Sigmoid colon (tissue), 7 donors: ENCODE measurements at regions of chr15 and their contacts with region 1.

Region 1: GRCh38 chr15:38683382-38684242 is 119.0 kb upstream of the RASGRP1 start:
- DNase-seq: no peak
- H3K4me3 ChIP-seq: no peak overlapping the region
- H3K27ac ChIP-seq: no peak overlapping the region
- H3K4me1 ChIP-seq: no peaks in the 10 kb centered on the region
- H3K27me3 ChIP-seq: no peaks in the 10 kb centered on the region
- CTCF ChIP-seq: peak; percentile 26 to 68 (median 50)
- EP300 ChIP-seq: no peak
- POLR2A ChIP-seq: no peak

Region 2: GRCh38 chr15:38440353-38441129 is 243.1 kb before region 1 on chr15:
- intact Hi-C with region 1: loop called (anchors 5 kb)
- DNase-seq: no peak
- H3K4me3 ChIP-seq: no peak overlapping the region
- H3K27ac ChIP-seq: no peak overlapping the region
- H3K4me1 ChIP-seq: peaks cover 0 to 7% (median 3%) of the 10 kb centered on the region in 4 donors
- H3K27me3 ChIP-seq: no peaks in the 10 kb centered on the region
- CTCF ChIP-seq: peak; percentile 72 to 92 (median 88)
- EP300 ChIP-seq: no peak
- POLR2A ChIP-seq: no peak

Region 3: GRCh38 chr15:38474155-38474757 is 209.4 kb before region 1 on chr15:
- intact Hi-C with region 1: loop called (anchors 2 kb)
- DNase-seq: no peak
- H3K4me3 ChIP-seq: no peak overlapping the region
- H3K27ac ChIP-seq: no peak overlapping the region
- H3K4me1 ChIP-seq: no peaks in the 10 kb centered on the region
- H3K27me3 ChIP-seq: no peaks in the 10 kb centered on the region
- CTCF ChIP-seq: peak in 3 of 4 experiments; percentile 49 to 64 (median 55)
- EP300 ChIP-seq: no peak
- POLR2A ChIP-seq: no peak

Region 4: DNA sequence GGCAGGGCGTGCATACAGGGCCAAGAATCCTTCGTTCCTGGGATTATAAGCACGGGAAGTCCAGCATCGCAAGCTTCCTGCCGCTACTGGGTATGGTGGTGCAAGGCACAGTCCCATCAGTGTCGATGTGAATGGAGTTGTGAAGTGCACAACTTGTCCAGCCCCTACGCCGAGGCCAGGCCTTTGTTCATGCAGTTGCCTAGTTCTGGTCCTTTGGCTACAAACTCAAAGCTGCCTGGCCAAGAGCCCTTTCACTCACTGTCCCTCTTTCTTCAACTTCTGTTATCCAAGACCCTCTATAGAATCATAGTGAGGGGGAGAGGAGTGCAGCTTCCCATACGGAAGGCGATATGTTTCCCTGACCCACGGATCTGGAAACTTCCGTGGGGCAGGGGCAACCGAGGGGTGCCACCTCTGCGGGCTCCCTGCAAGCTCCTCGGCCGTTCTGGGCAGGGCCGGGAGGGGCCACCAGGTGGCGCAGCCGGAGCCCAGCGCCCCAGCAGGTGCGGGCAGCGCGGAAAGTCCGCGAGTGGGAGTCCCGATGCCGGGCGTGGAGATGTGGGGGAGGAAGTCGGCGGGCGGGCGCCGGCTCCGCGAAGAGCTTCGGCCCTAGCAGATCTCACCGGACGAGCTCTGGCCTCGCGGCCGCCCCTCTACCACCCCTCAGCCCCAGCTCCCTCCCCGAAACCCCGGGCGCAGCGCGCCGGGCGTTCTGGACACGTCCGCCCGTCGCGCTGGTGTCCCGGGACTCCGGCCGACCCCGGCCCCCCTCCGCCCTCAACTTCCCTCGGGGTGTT is 119.7 kb before region 1 on chr15:
- intact Hi-C with region 1: loop called (anchors 5 kb)
- DNase-seq: no peak
- H3K4me3 ChIP-seq: peak overlapping the region; percentile 33 to 68 (median 55)
- H3K27ac ChIP-seq: peak overlapping the region in 1 of 4 donors; percentile 10
- H3K4me1 ChIP-seq: peaks cover 0 to 15% (median 14%) of the 10 kb centered on the region in 4 donors
- H3K27me3 ChIP-seq: peaks cover 0 to 25% (median 22%) of the 10 kb centered on the region in 3 donors
- CTCF ChIP-seq: peak; percentile 20 to 76 (median 54)
- EP300 ChIP-seq: no peak
- POLR2A ChIP-seq: no peak